AG04450 (cell line): ENCODE measurements at regions of chr12 and their contacts with region 1.

Region 1: DNA sequence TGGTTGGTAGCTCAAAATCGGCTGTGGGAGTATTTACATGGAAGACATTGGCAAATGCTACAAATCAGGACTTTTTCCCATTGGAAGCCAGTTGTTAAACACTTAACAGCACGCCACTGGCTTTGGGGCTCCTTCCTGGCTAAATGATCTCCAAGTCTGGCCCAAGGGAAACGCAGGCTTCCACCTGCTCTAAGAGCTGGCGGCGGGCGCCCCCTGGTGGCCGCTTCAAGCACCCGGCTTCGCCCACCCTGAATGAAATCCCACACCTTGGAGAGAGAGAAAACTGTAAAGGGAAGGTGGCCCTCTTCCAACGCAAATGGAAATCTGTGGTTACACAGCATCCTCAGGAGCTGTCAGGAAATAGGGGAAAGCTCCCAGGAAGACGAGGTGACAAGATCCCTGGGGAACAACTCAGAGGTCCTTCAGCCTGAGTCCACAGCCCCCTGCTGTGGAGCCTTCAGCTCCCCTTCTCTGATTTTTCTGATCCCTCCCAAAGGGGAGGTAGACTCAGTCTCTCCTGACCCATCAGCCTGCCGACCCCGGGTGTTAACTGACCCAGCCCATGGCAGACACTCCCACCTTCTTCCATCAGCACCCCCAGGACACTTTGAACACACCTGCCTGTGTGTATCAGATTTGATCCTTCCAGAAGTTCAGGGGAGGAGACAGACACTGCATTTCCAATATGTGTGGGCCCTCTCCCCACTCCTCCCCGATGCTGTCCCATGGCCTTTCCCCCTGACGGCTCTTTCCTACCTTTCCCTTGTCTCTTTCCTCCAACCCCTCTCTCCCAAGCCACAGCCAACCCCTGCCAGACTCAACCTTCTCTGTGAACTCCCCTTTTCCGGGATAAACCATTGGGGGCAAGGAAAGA is 15.4 kb downstream of the SELPLG start:
- DNase-seq: peak; percentile 72
- H3K4me3 ChIP-seq: no peak overlapping the region
- H3K27ac ChIP-seq: no peak overlapping the region
- H3K27me3 ChIP-seq: no peaks in the 10 kb centered on the region
- CTCF ChIP-seq: peak; percentile 94

Region 2: DNA sequence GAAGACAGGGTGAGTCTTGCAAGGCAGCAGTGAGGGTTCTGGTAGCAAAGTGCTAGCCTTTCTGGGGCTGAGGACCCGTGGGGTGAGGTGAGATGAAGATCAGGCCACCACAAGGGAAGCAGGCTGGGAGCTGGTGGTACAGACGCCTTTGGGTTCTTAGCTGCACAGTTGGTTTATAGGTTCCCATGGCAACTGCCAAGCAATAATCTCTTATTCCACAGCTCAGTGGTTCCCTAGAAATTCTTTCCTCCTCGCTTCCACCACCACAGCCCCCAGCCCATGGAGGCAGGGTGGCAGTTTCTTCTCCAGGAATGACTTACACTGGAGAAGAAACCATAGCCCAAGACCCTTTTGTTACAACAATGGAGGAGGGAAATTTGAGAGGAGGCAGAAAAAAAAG is 361.3 kb before region 1 on chr12:
- CTCF ChIA-PET with region 1: no interaction called
- POLR2A ChIA-PET with region 1: no interaction called
- DNase-seq: no peak
- H3K4me3 ChIP-seq: no peak overlapping the region
- H3K27ac ChIP-seq: no peak overlapping the region
- H3K27me3 ChIP-seq: no peaks in the 10 kb centered on the region
- CTCF ChIP-seq: no peak

Region 3: GRCh38 chr12:108547686-108548085 is 70.6 kb before region 1 on chr12:
- CTCF ChIA-PET with region 1: interaction called, 12 read pairs
- POLR2A ChIA-PET with region 1: no interaction called
- DNase-seq: no peak
- H3K4me3 ChIP-seq: no peak overlapping the region
- H3K27ac ChIP-seq: no peak overlapping the region
- H3K27me3 ChIP-seq: no peaks in the 10 kb centered on the region
- CTCF ChIP-seq: no peak

Region 4: GRCh38 chr12:108576660-108577234 is 41.6 kb before region 1 on chr12:
- CTCF ChIA-PET with region 1: interaction called, 508 read pairs
- POLR2A ChIA-PET with region 1: no interaction called
- DNase-seq: no peak
- H3K4me3 ChIP-seq: no peak overlapping the region
- H3K27ac ChIP-seq: no peak overlapping the region
- H3K27me3 ChIP-seq: no peaks in the 10 kb centered on the region
- CTCF ChIP-seq: no peak

Region 5: GRCh38 chr12:108589028-108589839 is 29.1 kb before region 1 on chr12:
- CTCF ChIA-PET with region 1: interaction called, 12 read pairs
- POLR2A ChIA-PET with region 1: interaction called, 5 read pairs
- DNase-seq: no peak
- H3K4me3 ChIP-seq: no peak overlapping the region
- H3K27ac ChIP-seq: no peak overlapping the region
- H3K27me3 ChIP-seq: no peaks in the 10 kb centered on the region
- CTCF ChIP-seq: no peak

Region 6: GRCh38 chr12:108640802-108641445 is 22.6 kb after region 1 on chr12:
- CTCF ChIA-PET with region 1: interaction called, 13 read pairs
- POLR2A ChIA-PET with region 1: interaction called, 5 read pairs
- DNase-seq: no peak
- H3K4me3 ChIP-seq: no peak overlapping the region
- H3K27ac ChIP-seq: peak overlapping the region; percentile 11
- H3K27me3 ChIP-seq: no peaks in the 10 kb centered on the region
- CTCF ChIP-seq: no peak

Region 7: DNA sequence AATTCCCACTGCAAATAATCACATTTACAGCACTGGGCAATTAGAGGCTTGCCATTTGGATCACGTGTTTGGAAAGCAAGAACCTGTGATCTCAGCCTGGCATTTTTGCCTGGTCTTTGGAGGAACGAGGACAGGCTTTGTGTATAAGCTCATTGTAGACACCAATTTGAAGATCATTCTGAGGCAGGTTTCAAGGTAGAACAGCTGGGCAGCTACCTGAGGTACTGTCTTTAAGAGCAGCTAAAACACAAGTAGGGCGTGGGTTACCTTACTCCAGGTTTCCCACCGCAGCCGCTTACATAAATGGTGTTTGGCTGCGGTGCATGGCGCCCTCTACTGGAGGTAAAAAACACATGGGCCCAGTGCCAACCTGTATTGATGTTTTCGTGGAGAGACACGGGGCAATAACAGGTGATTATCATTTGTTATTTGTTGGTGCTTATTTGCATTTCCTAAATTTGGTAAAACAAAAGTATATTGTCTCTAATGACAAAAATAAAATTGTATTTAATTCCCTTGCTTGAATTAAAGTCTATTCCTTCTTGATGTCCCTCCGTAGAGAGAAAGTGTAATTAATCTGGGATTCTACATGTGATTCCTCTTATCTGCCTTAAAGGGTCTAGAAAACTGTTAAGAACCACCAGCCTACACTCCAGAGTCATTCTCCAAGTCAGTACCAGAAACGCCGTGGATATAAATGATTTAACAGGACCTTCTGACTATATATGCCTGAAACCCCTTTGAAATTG is 332.8 kb after region 1 on chr12:
- CTCF ChIA-PET with region 1: interaction called, 14 read pairs
- POLR2A ChIA-PET with region 1: no interaction called
- DNase-seq: peak; percentile 13
- H3K4me3 ChIP-seq: no peak overlapping the region
- H3K27ac ChIP-seq: no peak overlapping the region
- H3K27me3 ChIP-seq: peaks cover 2% of the 10 kb centered on the region
- CTCF ChIP-seq: peak; percentile 84